ENCODE measurements at regions of chr5 and their contacts with region 1.

Region 1: GRCh38 chr5:178213003-178213449 is 8.7 kb downstream of the HNRNPAB start:
- DNase-seq: no peak
- ATAC-seq: no peak
- H3K4me3 ChIP-seq: no peak overlapping the region
- H3K4me3 Mint-ChIP-seq: no peak overlapping the region
- H3K27ac ChIP-seq: no peak overlapping the region
- H3K27ac Mint-ChIP-seq: peak overlapping the region in 4 of 9 donors; percentile 18 to 36 (median 28)
- H3K4me1 ChIP-seq: peaks cover 0 to 2% of the 10 kb centered on the region in 2 donors
- H3K4me1 Mint-ChIP-seq: peaks cover 8 to 42% (median 17%) of the 10 kb centered on the region in 7 donors
- H3K27me3 ChIP-seq: no peaks in the 10 kb centered on the region
- H3K27me3 Mint-ChIP-seq: no peaks in the 10 kb centered on the region

Region 2: DNA sequence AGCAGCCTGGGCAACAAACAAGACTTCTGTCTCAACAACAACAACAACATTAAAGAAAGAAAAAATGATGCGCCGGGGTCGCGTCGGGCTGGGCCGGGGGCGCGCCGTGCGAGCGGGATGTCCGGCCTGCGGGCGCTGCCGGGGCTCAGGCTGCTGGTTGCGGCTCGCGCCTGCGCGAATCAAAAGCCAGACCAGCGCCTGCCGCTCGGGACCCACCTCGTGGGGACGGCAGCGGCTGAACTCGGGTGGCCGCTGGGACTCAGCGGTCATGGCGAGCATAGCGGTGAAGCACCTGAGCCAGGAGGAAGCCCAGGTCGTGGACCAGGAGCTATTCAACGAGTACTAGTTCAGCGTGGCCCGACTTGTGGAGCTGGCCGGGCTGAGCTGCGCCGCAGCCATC is 47.4 kb before region 1 on chr5:
- CTCF ChIA-PET with region 1: no interaction called
- POLR2A ChIA-PET with region 1: no interaction called
- intact Hi-C with region 1: no loop called
- DNase-seq: no peak
- ATAC-seq: no peak
- H3K4me3 ChIP-seq: no peak overlapping the region
- H3K4me3 Mint-ChIP-seq: no peak overlapping the region
- H3K27ac ChIP-seq: no peak overlapping the region
- H3K27ac Mint-ChIP-seq: no peak overlapping the region
- H3K4me1 ChIP-seq: peaks cover 0 to 3% of the 10 kb centered on the region in 2 donors
- H3K4me1 Mint-ChIP-seq: peaks cover 0 to 10% (median 8%) of the 10 kb centered on the region in 7 donors
- H3K27me3 ChIP-seq: no peaks in the 10 kb centered on the region
- H3K27me3 Mint-ChIP-seq: peaks cover 0 to 36% (median 9%) of the 10 kb centered on the region in 5 donors

Region 3: GRCh38 chr5:178227138-178227659 is 14.2 kb after region 1 on chr5:
- CTCF ChIA-PET with region 1: no interaction called
- POLR2A ChIA-PET with region 1: interaction called, 11 read pairs
- intact Hi-C with region 1: no loop called
- DNase-seq: no peak
- ATAC-seq: no peak
- H3K4me3 ChIP-seq: no peak overlapping the region
- H3K4me3 Mint-ChIP-seq: peak overlapping the region in 6 of 10 donors; percentile 5 to 74 (median 24)
- H3K27ac ChIP-seq: no peak overlapping the region
- H3K27ac Mint-ChIP-seq: peak overlapping the region in 6 of 9 donors; percentile 2 to 52 (median 22)
- H3K4me1 ChIP-seq: peaks cover 20% of the 10 kb centered on the region in 2 donors
- H3K4me1 Mint-ChIP-seq: peaks cover 46 to 71% (median 56%) of the 10 kb centered on the region in 7 donors
- H3K27me3 ChIP-seq: no peaks in the 10 kb centered on the region
- H3K27me3 Mint-ChIP-seq: no peaks in the 10 kb centered on the region